Spleen (tissue), 13 donors: ENCODE measurements at regions of chr1 and their contacts with region 1.

Region 1: GRCh38 chr1:6711174-6711573 is 9.6 kb upstream of the DNAJC11 start:
- DNase-seq: no peak
- H3K4me3 ChIP-seq: no peak overlapping the region
- H3K27ac ChIP-seq: no peak overlapping the region
- H3K4me1 ChIP-seq: no peaks in the 10 kb centered on the region
- H3K27me3 ChIP-seq: peaks cover 0 to 4% (median 0%) of the 10 kb centered on the region in 7 donors
- CTCF ChIP-seq: no peak
- POLR2A ChIP-seq: no peak

Region 2: GRCh38 chr1:6497183-6497897 is 213.8 kb before region 1 on chr1:
- intact Hi-C with region 1: no loop called
- DNase-seq: peak; percentile 84
- H3K4me3 ChIP-seq: peak overlapping the region; percentile 39 to 80 (median 54)
- H3K27ac ChIP-seq: peak overlapping the region; percentile 41 to 86 (median 80)
- H3K4me1 ChIP-seq: peaks cover 18 to 96% (median 72%) of the 10 kb centered on the region in 6 donors
- H3K27me3 ChIP-seq: peaks cover 0 to 47% (median 5%) of the 10 kb centered on the region in 7 donors
- CTCF ChIP-seq: no peak
- POLR2A ChIP-seq: no peak

Region 3: DNA sequence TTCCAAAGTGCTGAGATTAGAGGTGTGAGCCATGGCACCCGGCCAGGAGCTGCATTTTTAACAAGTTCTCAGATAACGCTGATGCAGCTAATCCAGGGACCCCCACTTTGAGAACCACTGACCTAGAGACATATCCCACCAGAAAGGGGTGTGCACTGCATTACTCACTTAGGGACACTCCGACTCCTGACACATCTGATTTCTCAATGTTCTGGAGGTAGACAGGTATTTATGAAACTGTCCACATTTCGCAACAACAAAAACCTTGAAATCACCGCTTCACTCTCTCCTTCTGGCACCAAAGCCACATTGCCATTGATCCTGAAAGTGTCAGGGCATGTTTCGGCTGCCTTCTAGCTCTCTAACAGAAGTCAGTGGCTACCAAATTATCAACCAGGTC is 50.9 kb after region 1 on chr1:
- intact Hi-C with region 1: no loop called
- DNase-seq: no peak
- H3K4me3 ChIP-seq: no peak overlapping the region
- H3K27ac ChIP-seq: no peak overlapping the region
- H3K4me1 ChIP-seq: no peaks in the 10 kb centered on the region
- H3K27me3 ChIP-seq: peaks cover 0 to 6% (median 0%) of the 10 kb centered on the region in 7 donors
- CTCF ChIP-seq: no peak
- POLR2A ChIP-seq: no peak

Region 4: GRCh38 chr1:7646981-7647901 is 936.1 kb after region 1 on chr1:
- intact Hi-C with region 1: loop called (anchors 10 kb)
- DNase-seq: peak; percentile 93
- H3K4me3 ChIP-seq: no peak overlapping the region
- H3K27ac ChIP-seq: no peak overlapping the region
- H3K4me1 ChIP-seq: peaks cover 0 to 26% (median 17%) of the 10 kb centered on the region in 6 donors
- H3K27me3 ChIP-seq: peaks cover 0 to 29% (median 0%) of the 10 kb centered on the region in 7 donors
- CTCF ChIP-seq: peak; percentile 54 to 95 (median 87)
- POLR2A ChIP-seq: no peak